ENCODE measurements at regions of chr15 and their contacts with region 1.

Region 1: GRCh38 chr15:84748274-84749110 is at the start of gene ZNF592:
- DNase-seq: peak; percentile 75
- H3K4me3 Mint-ChIP-seq: peak within 1 kb of the TSS; percentile 91
- H3K27ac Mint-ChIP-seq: peak within 1 kb of the TSS; percentile 95
- H3K4me1 Mint-ChIP-seq: peaks cover 56% of the 10 kb centered on the region
- H3K27me3 Mint-ChIP-seq: no peaks in the 10 kb centered on the region
- total RNA-seq, gene ZNF592: 29.9 and 30.9 TPM in 2 replicates

Region 2: DNA sequence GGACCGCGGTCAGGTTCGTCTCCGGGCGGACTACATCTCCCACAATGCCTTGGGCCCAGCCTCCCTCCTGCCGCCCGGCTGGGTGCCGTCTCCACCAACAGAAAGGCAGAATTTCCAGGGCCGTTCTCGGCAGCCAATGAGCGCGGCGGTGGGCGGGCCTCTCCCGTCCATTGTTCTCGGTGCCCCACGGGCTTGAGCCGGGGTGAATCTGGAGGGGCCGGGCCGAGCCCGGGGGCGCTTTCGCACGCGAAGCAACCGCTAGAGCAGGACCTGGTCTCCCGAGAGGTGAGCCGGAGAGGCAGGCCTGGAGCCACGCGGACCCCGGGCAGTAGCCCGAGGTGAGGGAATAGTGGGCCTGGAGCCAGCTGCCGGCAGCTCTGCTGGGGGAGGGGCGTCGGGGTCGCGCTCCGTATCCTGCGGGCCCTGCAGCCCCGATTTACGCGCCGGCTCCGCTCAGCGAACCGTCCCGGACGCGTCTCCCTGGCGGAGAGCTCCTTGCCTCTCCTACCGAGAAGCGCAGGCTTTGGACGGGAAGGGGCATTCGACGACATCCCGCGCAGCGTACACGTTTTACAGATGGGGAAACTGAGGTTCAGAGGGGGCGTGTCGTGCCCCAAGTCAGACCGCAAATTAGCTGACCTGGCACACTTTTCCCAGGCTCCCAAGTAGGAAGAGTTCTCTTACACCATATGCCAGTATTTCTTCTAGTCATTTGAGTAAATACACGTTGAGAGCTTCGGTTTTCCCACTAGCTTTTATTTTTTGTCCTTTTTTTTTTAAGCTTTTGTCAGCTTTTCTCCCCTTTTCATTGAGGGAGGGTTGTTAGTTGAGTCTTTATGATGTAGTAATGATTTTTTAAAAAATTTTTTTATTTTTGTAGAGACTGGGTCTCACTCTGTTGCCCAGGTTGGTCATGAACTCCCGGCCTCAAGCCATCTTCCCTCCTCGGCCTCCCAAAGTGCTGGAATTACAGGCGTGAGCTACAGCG is 147.3 kb before region 1 on chr15 and contains the start of gene ZSCAN2:
- intact Hi-C with region 1: loop called (anchors 1 kb)
- DNase-seq: peak; percentile 92
- H3K4me3 Mint-ChIP-seq: peak within 1 kb of the TSS; percentile 89
- H3K27ac Mint-ChIP-seq: peak within 1 kb of the TSS; percentile 72
- H3K4me1 Mint-ChIP-seq: peaks cover 59% of the 10 kb centered on the region
- H3K27me3 Mint-ChIP-seq: no peaks in the 10 kb centered on the region
- total RNA-seq, gene ZSCAN2: 6.5 and 7.0 TPM in 2 replicates

Region 3: DNA sequence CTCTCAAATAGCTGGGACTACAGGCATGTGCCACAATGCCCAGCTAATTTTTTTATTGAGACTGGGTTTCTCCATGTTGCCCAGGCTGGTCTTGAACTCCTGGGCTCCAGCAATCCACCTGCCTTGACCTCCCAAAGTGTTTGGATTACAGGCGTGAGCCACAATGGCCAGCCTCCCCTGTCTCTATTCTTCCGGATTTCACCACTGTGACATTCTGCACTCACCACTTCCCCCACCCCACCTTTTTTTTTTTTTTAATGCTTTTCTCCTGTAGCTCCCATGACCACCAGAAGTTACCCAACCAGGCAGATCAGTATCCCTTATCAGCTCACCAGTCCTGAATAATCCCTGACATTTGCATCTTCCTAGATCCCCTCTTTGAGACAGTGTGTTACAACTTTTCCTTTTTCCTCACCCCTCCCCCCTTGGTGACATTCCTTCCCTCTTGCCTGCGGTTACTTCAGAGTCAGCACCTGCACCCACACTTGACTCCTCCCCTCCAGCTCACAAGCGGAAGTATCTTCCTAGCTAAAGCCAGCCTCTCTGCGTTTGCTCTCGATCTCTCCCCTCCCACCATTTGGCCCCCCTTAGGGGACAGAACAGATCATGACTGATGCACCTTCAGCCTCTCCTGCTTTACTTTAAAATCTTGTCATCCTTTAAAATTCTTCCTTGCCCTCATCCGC is 13.6 kb before region 1 on chr15:
- intact Hi-C with region 1: loop called (anchors 1 kb)
- DNase-seq: peak; percentile 67
- H3K4me3 Mint-ChIP-seq: peak overlapping the region; percentile 74
- H3K27ac Mint-ChIP-seq: peak overlapping the region; percentile 93
- H3K4me1 Mint-ChIP-seq: peaks cover 48% of the 10 kb centered on the region
- H3K27me3 Mint-ChIP-seq: no peaks in the 10 kb centered on the region

Measured in activated T-helper 1 cell treated with anti-CD3 and anti-CD28 coated beads, Interleukin-12 subunit alpha, Interleukin-12 subunit beta, Interleukin-2, Interleukin-4 antibody, amounts not matched to agents 30 ng/mL and 10 ng/mL and 1 ng/mL, durations not matched to agents 14 hours and 24 hours and 36 hours (primary cell).